ENCODE measurements at regions of chr13 and their contacts with region 1.

Region 1: DNA sequence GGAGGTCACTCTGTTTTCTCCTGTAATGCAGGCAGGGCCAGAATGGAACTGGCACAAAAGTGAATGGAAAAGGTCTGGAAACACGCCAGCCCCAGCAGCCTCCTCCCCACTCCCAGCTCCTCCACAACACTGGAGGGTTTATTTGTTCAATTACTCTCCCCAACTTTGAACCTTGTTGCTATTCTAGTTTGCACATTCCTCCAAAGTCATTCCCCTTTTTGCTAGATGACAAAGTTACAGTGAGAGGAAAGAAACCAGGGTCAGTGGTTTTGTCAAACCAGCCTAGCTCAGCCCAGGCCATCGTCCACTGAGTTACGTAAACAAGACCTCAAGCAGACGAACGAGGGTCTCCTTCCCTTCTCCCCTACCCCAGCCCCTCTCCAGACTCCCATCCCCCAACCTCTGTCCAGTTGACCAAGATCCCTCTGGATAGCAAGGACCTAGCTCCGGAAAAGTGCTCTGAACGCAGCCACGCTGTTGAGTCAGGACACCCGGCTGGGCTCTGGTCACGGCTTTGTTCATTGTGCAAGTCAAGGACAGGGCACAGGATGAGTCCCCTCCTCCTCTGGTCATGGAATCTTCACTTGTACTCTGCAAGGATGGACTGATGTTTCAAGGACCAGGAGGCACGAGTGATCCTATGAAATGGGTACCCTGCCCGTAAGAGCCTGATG is 180.0 kb downstream of the USP12 start:
- DNase-seq: no peak
- ATAC-seq: no peak
- H3K4me3 ChIP-seq: no peak overlapping the region
- H3K27ac ChIP-seq: no peak overlapping the region
- H3K4me1 ChIP-seq: no peaks in the 10 kb centered on the region; a peak in 1 of 4 replicates
- H3K27me3 ChIP-seq: no peaks in the 10 kb centered on the region
- CTCF ChIP-seq: no peak
- POLR2A ChIP-seq: no peak
- RAD21 ChIP-seq: no peak

Region 2: DNA sequence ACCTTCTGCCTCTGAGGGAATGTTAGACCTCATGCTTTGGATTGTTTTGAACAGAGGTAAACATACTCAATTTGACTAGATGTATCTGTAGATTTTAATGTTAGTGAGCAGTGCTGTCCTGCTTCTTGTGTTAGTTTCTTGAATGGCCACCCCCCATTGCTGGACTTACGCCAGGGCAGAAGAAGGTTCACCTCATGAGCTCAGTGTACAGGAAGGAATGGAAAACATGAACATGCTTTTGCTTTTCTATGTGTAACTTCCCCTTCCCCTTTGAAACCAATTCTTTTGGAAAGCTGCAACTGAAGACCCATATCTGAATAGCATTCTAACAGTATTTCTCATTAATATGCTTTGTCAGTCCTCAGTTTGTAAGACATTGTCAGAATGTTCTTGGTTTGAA is 401.9 kb before region 1 on chr13:
- CTCF ChIA-PET with region 1: no interaction called
- POLR2A ChIA-PET with region 1: no interaction called
- RAD21 ChIA-PET with region 1: no interaction called
- intact Hi-C with region 1: no loop called
- DNase-seq: no peak
- ATAC-seq: no peak
- H3K4me3 ChIP-seq: no peak overlapping the region
- H3K27ac ChIP-seq: no peak overlapping the region
- H3K4me1 ChIP-seq: no peaks in the 10 kb centered on the region
- H3K27me3 ChIP-seq: peaks cover 62% of the 10 kb centered on the region
- CTCF ChIP-seq: no peak
- POLR2A ChIP-seq: no peak
- RAD21 ChIP-seq: no peak

Region 3: DNA sequence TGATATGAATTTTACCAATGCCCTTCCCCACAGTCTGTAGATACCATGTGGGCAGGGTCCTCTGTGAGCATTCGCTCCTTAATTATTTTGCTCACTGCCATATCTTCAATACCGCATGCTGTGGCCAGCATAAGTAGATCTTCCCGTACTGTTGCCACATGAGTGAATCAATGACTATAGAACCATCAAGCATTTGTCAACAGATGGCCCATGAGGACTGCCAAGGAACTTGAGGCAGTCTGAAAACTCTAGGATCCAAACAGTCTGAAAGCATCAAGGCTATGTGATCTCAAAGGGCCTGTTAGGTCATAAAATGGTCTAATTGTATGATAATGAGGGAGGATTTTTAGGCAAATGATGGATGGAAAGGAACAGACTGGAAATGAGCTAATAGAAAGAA is 203.7 kb before region 1 on chr13:
- CTCF ChIA-PET with region 1: no interaction called
- POLR2A ChIA-PET with region 1: no interaction called
- RAD21 ChIA-PET with region 1: no interaction called
- intact Hi-C with region 1: no loop called
- DNase-seq: no peak
- ATAC-seq: no peak
- H3K4me3 ChIP-seq: no peak overlapping the region
- H3K27ac ChIP-seq: no peak overlapping the region
- H3K4me1 ChIP-seq: peaks cover 0 to 4% of the 10 kb centered on the region in 2 experiments; a peak in 1 of 4 replicates
- H3K27me3 ChIP-seq: peaks cover 71% of the 10 kb centered on the region
- CTCF ChIP-seq: no peak
- POLR2A ChIP-seq: no peak
- RAD21 ChIP-seq: no peak

Region 4: DNA sequence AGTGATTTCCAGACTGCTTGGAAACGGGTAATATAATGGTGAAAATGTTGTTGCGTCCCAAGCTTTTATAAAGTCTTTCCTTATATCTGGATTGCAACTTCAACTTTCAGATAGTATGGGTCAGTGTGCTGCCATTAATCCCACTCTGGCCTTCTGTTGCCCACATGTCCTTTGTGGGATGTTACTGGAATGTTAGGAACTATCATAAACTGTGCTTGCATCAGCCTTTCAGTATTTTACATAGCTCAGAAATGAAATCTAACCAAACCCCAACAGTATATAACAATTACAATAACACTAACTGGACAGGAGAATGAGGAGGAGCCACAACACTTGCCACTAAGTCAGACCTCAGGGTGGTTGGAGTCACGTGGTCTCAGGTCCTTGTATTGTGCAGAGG is 549.7 kb after region 1 on chr13:
- CTCF ChIA-PET with region 1: no interaction called
- POLR2A ChIA-PET with region 1: no interaction called
- RAD21 ChIA-PET with region 1: no interaction called
- intact Hi-C with region 1: loop called (anchors 5 kb)
- DNase-seq: no peak
- ATAC-seq: no peak
- H3K4me3 ChIP-seq: no peak overlapping the region
- H3K27ac ChIP-seq: no peak overlapping the region
- H3K4me1 ChIP-seq: no peaks in the 10 kb centered on the region
- H3K27me3 ChIP-seq: no peaks in the 10 kb centered on the region
- CTCF ChIP-seq: no peak
- POLR2A ChIP-seq: no peak
- RAD21 ChIP-seq: no peak

Measured in HCT116 (cell line).